Right ventricle myocardium superior (tissue), 1 donor: ENCODE measurements at regions of chr14 and their contacts with region 1.

Region 1: GRCh38 chr14:60091550-60092530 is at the start of gene PCNX4:
- DNase-seq: peak; percentile 98
- ATAC-seq: peak; percentile 98
- total RNA-seq, gene PCNX4: 18.6 TPM

Region 2: GRCh38 chr14:59333668-59334067 is 758.2 kb before region 1 on chr14:
- intact Hi-C with region 1: loop called (anchors 10 kb)
- DNase-seq: no peak
- ATAC-seq: peak; percentile 90

Region 3: GRCh38 chr14:60125918-60126317 is 34.1 kb after region 1 on chr14:
- intact Hi-C with region 1: no loop called
- DNase-seq: no peak
- ATAC-seq: no peak

Region 4: GRCh38 chr14:60164712-60165546 is 73.1 kb after region 1 on chr14 and contains the start of gene DHRS7:
- intact Hi-C with region 1: loop called (anchors 5 kb)
- DNase-seq: peak; percentile 93
- ATAC-seq: peak; percentile 99
- total RNA-seq, gene DHRS7: 34.4 TPM

Region 5: DNA sequence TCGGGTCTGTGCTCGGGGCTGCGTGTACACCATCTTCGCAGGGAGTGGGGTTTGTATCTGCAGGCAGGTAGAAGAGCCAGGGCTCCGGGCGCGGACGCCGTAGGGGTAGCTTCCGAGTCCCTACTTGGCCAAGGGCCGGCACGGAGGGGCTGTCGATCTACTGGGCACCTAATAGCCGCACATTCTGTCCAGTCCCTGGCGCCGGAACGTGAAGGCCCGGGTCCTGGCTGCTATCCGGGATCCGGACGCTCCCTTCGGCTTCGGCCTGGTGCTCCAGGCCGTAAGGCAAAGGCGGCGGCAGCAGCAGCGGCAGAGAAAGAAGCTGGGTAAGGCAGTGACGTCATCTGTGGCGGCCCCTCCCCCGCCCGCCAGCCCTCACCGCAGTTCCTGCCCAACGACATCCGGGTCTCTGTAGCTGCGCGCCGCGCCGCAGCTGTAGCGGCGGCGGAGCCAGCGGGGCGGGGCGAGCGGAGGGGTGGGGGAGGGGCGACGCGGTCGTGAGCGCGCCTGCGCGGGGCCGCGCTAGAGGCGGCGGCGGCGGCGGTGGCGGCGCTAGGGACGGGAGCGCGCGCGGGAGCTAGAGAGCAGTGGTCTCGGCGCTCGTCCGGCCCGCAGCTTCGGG is 157.0 kb after region 1 on chr14 and contains the start of gene PPM1A:
- intact Hi-C with region 1: loop called (anchors 5 kb)
- DNase-seq: peak; percentile 98
- ATAC-seq: peak; percentile 93
- total RNA-seq, gene PPM1A: 116 TPM